Sciatic nerve (tissue), 2 donors: ENCODE measurements at regions of chr12 and their contacts with region 1.

Region 1: DNA sequence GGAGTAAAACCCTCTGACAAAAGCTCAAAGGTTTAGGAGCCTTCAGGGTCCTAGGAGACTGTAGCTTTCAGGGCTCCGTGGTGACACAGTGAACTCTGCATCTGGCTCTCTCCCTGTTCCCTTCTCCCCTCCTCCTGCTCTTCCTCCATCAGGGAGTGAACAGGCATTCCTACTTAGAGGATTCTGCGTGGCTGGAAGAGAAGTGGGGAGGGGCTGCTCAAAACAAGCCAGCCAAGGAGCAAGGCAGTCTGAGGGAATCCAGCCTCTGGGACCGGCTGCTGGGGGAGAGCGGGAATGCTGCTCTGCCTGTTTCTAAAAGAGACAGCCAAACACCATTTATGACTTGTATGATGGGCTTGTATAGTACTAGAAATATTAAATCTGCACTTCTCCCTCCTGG is 49.5 kb downstream of the RBMS2 start:
- DNase-seq: no peak
- ATAC-seq: peak; percentile 34

Region 2: GRCh38 chr12:56518570-56518969 is 52.6 kb before region 1 on chr12:
- intact Hi-C with region 1: loop called (anchors 5 kb)
- DNase-seq: no peak
- ATAC-seq: no peak